ENCODE measurements at regions of chr1 and their contacts with region 1.

Region 1: GRCh38 chr1:26161415-26162219 is 2.7 kb downstream of the FAM110D start:
- DNase-seq: peak; percentile 77 to 87 (median 77)
- ATAC-seq: peak in 3 of 4 donors; percentile 25 to 69 (median 61)
- H3K4me3 ChIP-seq: peak overlapping the region; percentile 34 to 73 (median 60)
- H3K27ac ChIP-seq: peak overlapping the region in 11 of 12 donors; percentile 82 to 99 (median 92)
- H3K4me1 ChIP-seq: peaks cover 6 to 77% (median 44%) of the 10 kb centered on the region in 12 donors
- H3K27me3 ChIP-seq: peaks cover 0 to 38% (median 0%) of the 10 kb centered on the region in 9 donors
- CTCF ChIP-seq: peak in 6 of 12 donors; percentile 35 to 50 (median 44)
- POLR2A ChIP-seq: peak in 1 of 2 donors; percentile 64

Region 2: GRCh38 chr1:25904943-25905679 is 256.5 kb before region 1 on chr1:
- intact Hi-C with region 1: loop called in 2 of 10 experiments (anchors 10 kb)
- DNase-seq: peak; percentile 94 to 96 (median 95)
- ATAC-seq: peak; percentile 90 to 96 (median 95)
- H3K4me3 ChIP-seq: peak overlapping the region; percentile 59 to 85 (median 67)
- H3K27ac ChIP-seq: peak overlapping the region in 10 of 12 donors; percentile 40 to 82 (median 64)
- H3K4me1 ChIP-seq: peaks cover 4 to 30% (median 20%) of the 10 kb centered on the region in 12 donors
- H3K27me3 ChIP-seq: no peaks in the 10 kb centered on the region
- CTCF ChIP-seq: peak in 1 of 12 donors; percentile 14
- POLR2A ChIP-seq: no peak

Region 3: DNA sequence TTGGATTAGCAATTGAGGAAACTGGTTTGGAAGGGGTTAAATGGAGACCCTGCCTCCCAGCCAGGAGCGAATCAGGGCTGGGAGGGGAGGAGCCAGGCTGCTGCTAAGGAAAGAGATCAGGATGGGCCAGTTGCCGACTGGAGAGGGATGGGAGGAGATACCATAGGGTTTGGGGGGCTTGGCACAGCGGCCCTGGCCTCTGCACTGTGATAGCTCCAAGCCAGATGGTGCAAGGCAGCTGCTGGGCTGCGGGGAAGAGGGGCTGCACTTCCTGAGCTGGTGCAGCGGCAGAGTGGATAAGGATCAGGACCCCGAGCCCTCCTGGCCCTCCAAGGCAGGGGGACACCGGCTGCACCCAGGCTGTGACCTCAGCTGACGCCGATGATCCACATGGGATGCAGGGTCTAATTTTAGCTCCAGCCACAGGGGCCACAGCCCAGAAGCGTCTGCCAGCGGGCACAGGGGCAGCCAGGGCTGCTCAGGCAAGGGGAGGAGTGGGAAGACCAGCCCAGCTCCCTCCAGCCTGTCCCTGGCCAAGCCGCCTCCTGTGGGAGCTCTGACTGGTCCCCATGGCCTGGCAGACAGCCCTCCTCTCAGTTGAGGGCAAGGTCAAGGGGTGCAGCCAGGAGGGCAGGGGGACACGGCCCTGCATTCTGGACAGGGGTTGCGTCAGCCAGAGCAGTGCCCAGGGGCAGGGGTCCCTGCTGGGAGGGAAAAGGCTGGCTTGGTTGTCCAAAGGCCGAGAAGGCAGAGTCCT is 139.8 kb before region 1 on chr1 and contains the start of gene EXTL1:
- intact Hi-C with region 1: loop called in 1 of 10 experiments (anchors 5 kb)
- DNase-seq: peak; percentile 79 to 91 (median 84)
- ATAC-seq: peak; percentile 78 to 88 (median 87)
- H3K4me3 ChIP-seq: peak within 1 kb of the TSS in 9 of 12 donors; percentile 11 to 59 (median 38)
- H3K27ac ChIP-seq: peak within 1 kb of the TSS; percentile 55 to 98 (median 86)
- H3K4me1 ChIP-seq: peaks cover 0 to 74% (median 27%) of the 10 kb centered on the region in 12 donors
- H3K27me3 ChIP-seq: no peaks in the 10 kb centered on the region
- CTCF ChIP-seq: no peak
- POLR2A ChIP-seq: peak in 1 of 2 donors; percentile 24
- total RNA-seq, gene EXTL1: 1.8 to 17.5 (median 4.1) TPM

Region 4: GRCh38 chr1:26233903-26234643 is 72.5 kb after region 1 on chr1 and contains the start of gene CEP85:
- intact Hi-C with region 1: loop called in 4 of 10 experiments (anchors 2 to 5 kb)
- DNase-seq: peak; percentile 97 to 99 (median 98)
- ATAC-seq: peak; percentile 99 to 100 (median 99)
- H3K4me3 ChIP-seq: peak within 1 kb of the TSS; percentile 48 to 90 (median 78)
- H3K27ac ChIP-seq: peak within 1 kb of the TSS; percentile 5 to 96 (median 93)
- H3K4me1 ChIP-seq: peaks cover 0 to 36% (median 11%) of the 10 kb centered on the region in 12 donors
- H3K27me3 ChIP-seq: no peaks in the 10 kb centered on the region
- CTCF ChIP-seq: peak; percentile 72 to 95 (median 86)
- POLR2A ChIP-seq: peak; percentile 61 to 93
- total RNA-seq, gene CEP85: 28.6 to 180 (median 48.7) TPM